Activated naive CD8-positive, alpha-beta T cell treated with anti-CD3 and anti-CD28 coated beads, Interleukin-2, amount 10 ng/mL, durations not matched to agents 7 days and 5 days (primary cell): ENCODE measurements at regions of chr19 and their contacts with region 1.

Region 1: DNA sequence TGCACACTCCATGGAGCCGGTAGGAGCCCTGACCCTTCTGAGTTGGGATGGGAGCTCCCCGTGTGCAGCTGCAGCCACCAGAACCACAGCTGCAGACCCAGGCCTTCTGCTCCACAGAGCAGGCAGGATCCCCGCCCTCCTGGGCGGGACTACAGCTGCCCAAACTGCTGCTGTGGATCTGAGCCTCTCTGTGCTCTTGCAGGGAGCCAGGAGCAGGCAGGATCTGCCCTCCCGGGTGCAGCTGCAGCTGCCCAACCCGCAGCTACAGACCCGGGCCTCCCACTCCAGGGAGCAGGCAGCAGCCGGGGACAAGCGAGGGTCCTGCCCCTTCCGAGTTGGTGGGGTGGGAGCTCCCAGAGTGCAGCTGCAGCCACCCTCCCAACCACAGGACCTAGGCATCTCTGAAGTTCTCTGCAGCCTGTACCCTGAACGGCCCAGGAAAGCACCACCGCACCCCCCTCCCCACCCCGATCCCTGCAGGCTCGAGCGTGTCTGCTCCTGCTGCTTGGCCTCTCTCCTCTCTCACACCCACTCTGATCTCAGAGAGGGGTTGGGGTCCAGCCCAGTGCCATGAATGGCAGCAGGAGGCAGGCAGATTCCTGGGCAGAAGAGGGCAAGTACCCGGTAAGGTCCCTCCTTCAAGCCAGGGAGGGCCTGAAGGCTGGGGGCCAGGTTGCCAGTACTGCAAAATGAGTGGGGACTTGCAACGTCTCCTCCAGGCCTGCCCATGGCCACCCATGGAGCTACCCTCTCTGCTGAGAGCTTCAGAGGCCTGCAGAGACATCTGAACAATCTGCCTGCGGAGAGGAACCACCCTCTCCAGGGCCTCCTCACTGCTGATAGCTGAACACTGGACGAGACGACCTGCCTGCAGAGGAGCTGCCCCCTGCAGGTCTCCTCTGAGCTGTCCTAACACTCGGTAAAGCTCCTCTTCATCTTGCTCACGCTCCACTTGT is 16.4 kb upstream of the EMP3 start:
- DNase-seq: no peak
- ATAC-seq: no peak
- H3K4me3 Mint-ChIP-seq: no peak overlapping the region
- H3K27ac Mint-ChIP-seq: no peak overlapping the region
- H3K4me1 Mint-ChIP-seq: no peaks in the 10 kb centered on the region
- H3K27me3 Mint-ChIP-seq: peaks cover 4% of the 10 kb centered on the region

Region 2: DNA sequence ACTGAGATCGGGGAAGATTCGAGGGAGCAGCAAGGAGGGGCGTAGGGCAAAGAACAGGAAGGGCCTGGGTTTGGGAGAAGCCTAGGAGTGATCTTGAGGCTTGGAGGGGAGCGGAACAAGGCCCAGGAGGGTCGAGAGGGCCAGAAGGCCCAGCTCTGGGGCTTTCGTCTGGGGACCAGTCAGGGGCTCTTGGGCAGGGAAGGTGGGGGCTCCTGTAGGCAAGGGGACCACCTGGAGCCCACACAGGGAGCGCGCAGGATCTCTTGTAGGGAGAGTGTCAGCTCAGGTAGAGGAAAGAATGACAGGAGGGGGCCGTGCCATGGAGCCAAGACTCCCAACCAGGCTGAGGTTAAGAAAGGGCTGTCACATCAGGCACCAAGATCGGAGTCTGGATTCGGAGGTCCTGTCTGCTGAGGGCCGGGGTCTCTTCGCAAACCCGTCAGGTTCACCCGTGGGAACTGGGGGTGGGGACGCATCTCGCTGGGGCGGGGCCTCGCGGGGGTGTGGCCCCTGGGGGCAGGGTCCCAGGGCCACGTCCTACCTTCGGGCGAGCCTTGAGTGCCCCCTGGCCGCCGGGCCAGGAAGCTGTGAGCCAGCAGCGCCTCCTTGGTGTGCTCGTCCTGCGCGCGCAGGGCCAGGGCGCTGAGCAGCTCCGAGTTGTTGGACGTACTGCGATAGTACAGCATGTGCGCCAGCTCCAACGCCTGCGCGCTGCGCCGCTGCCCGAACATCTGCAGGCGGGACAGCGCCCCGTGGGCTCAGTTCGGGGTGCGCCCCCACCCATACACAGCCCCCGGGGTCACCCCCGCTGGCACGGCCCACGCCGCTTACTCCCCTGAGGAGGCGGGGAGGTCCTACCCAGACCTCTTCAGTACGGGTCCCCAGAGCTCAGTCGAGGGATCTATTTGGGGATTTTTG is 24.8 kb after region 1 on chr19:
- POLR2A ChIA-PET with region 1: interaction called, 10 read pairs
- DNase-seq: peak; percentile 97
- ATAC-seq: peak; percentile 69
- H3K4me3 Mint-ChIP-seq: peak overlapping the region; percentile 88
- H3K27ac Mint-ChIP-seq: peak overlapping the region; percentile 93
- H3K4me1 Mint-ChIP-seq: peaks cover 37% of the 10 kb centered on the region
- H3K27me3 Mint-ChIP-seq: no peaks in the 10 kb centered on the region